ENCODE measurements at regions of chr17 and their contacts with region 1.

Region 1: GRCh38 chr17:29640413-29640812 is 17.7 kb upstream of the CORO6 start:
- DNase-seq: no peak
- ATAC-seq: no peak
- H3K4me3 Mint-ChIP-seq: no peak overlapping the region
- H3K27ac Mint-ChIP-seq: peak overlapping the region; percentile 12
- H3K4me1 Mint-ChIP-seq: peaks cover 19% of the 10 kb centered on the region
- H3K27me3 Mint-ChIP-seq: no peaks in the 10 kb centered on the region

Region 2: GRCh38 chr17:29607557-29608420 is 32.6 kb before region 1 on chr17:
- CTCF ChIA-PET with region 1: no interaction called
- POLR2A ChIA-PET with region 1: no interaction called
- DNase-seq: no peak
- ATAC-seq: no peak
- H3K4me3 Mint-ChIP-seq: no peak overlapping the region
- H3K27ac Mint-ChIP-seq: no peak overlapping the region
- H3K4me1 Mint-ChIP-seq: no peaks in the 10 kb centered on the region
- H3K27me3 Mint-ChIP-seq: no peaks in the 10 kb centered on the region

Region 3: GRCh38 chr17:29628644-29629043 is 11.8 kb before region 1 on chr17:
- CTCF ChIA-PET with region 1: interaction called, 19 read pairs
- POLR2A ChIA-PET with region 1: interaction called, 4 read pairs
- DNase-seq: no peak
- ATAC-seq: no peak
- H3K4me3 Mint-ChIP-seq: no peak overlapping the region
- H3K27ac Mint-ChIP-seq: no peak overlapping the region
- H3K4me1 Mint-ChIP-seq: peaks cover 47% of the 10 kb centered on the region
- H3K27me3 Mint-ChIP-seq: no peaks in the 10 kb centered on the region

Region 4: DNA sequence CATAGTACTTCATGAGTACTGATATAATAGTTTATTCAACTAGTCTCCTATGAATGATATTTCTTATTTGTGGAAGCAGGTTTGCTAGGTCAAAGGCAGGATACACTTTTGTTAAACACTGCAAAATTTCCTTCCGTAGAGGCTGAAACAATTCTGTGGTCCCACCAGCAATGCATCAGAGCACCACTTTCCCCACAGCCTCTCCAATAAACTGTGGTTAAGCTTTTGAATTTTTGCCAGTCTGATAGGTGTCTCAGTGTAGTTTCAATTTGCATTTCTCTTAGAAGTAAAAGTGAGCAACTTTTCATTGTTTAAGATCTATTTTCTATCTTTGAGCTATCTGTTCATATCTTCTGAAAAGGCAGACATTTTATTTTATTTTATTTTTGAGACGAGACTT is 18.7 kb after region 1 on chr17:
- CTCF ChIA-PET with region 1: interaction called, 21 read pairs
- POLR2A ChIA-PET with region 1: no interaction called
- DNase-seq: peak; percentile 55
- ATAC-seq: peak; percentile 88
- H3K4me3 Mint-ChIP-seq: peak overlapping the region; percentile 38
- H3K27ac Mint-ChIP-seq: peak overlapping the region; percentile 81
- H3K4me1 Mint-ChIP-seq: peaks cover 10% of the 10 kb centered on the region
- H3K27me3 Mint-ChIP-seq: no peaks in the 10 kb centered on the region

Region 5: DNA sequence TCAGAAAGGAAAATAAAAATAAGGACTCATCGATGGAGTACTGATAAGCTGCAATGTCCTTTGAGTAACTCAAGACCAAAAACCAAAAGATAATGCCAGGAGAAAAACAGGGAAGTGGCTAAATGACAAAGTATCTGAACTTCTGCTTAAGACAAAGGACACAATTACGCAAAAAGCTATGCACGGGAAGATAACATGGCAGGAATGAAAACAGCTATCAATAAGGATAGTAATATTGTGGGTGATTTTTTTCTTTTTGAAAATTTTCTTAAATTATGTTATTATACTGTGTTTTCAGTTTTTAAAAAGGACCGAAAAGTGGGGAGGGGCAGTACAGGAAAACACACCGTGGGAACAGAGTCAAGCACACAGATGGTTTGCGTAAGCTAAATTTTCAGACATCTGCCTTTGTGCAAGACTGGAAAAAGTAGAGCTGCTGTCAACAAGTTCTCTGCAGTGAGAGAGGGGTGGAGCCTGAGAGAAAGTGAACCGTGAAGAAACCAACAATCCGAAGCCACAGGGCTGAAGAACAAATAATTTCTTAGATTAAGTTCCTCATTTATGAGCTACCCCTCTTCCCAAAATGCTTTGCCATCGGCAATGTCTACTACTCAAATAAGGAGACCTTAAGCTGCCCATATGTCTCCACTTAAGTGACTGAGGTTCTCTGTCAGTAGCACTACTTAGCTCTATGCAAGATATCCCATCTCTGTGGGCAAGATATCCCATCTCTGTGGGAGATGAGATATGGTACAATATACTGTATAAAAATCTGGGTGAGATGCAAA is 82.2 kb after region 1 on chr17:
- CTCF ChIA-PET with region 1: interaction called, 11 read pairs
- POLR2A ChIA-PET with region 1: no interaction called
- DNase-seq: peak; percentile 41
- ATAC-seq: peak; percentile 73
- H3K4me3 Mint-ChIP-seq: peak overlapping the region; percentile 3
- H3K27ac Mint-ChIP-seq: peak overlapping the region; percentile 20
- H3K4me1 Mint-ChIP-seq: peaks cover 55% of the 10 kb centered on the region
- H3K27me3 Mint-ChIP-seq: no peaks in the 10 kb centered on the region

Region 6: DNA sequence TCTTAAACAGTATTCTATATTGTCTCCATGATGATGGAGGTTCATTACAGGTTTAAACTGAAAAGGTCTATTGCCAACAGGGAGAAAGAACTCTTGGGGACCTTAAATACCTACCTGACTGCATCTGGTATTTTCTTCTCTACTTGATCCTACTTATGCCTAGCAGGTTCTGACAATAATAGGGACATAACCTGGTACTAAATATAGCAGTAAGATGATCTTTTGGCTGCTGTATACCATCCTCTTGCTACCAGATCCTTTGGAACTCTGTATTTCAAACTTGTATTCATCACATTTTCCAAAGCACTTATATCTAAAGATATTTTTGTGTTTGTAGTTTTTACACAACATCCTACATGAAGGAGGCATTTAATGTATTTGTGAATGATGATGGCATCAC is 128.8 kb after region 1 on chr17:
- CTCF ChIA-PET with region 1: interaction called, 143 read pairs
- POLR2A ChIA-PET with region 1: interaction called, 3 read pairs
- DNase-seq: no peak
- ATAC-seq: no peak
- H3K4me3 Mint-ChIP-seq: no peak overlapping the region
- H3K27ac Mint-ChIP-seq: no peak overlapping the region
- H3K4me1 Mint-ChIP-seq: no peaks in the 10 kb centered on the region
- H3K27me3 Mint-ChIP-seq: no peaks in the 10 kb centered on the region

Region 7: GRCh38 chr17:29807520-29808351 is 167.3 kb after region 1 on chr17:
- CTCF ChIA-PET with region 1: interaction called, 35 read pairs
- POLR2A ChIA-PET with region 1: no interaction called
- DNase-seq: peak; percentile 82
- ATAC-seq: peak; percentile 74
- H3K4me3 Mint-ChIP-seq: no peak overlapping the region
- H3K27ac Mint-ChIP-seq: no peak overlapping the region
- H3K4me1 Mint-ChIP-seq: peaks cover 21% of the 10 kb centered on the region
- H3K27me3 Mint-ChIP-seq: no peaks in the 10 kb centered on the region